CD14-positive monocyte (primary cell): ENCODE measurements at regions of chr13 and their contacts with region 1.

Region 1: GRCh38 chr13:80469853-80470381 is 129.0 kb upstream of the SPRY2 start:
- DNase-seq: peak; percentile 67 to 85 (median 69)
- H3K4me3 ChIP-seq: peak overlapping the region in 1 of 3 experiments; percentile 19
- H3K4me3 Mint-ChIP-seq: peak overlapping the region in 1 of 2 donors; percentile 73
- H3K27ac ChIP-seq: no peak overlapping the region
- H3K27ac Mint-ChIP-seq: peak overlapping the region in 5 of 7 donors; percentile 18 to 92 (median 79)
- H3K4me1 ChIP-seq: peaks cover 26 to 27% of the 10 kb centered on the region in 2 donors
- H3K4me1 Mint-ChIP-seq: peaks cover 33% of the 10 kb centered on the region
- H3K27me3 ChIP-seq: no peaks in the 10 kb centered on the region
- H3K27me3 Mint-ChIP-seq: peaks cover 2 to 4% (median 2%) of the 10 kb centered on the region in 3 donors
- CTCF ChIP-seq: no peak

Region 2: GRCh38 chr13:80054806-80055205 is 415.1 kb before region 1 on chr13:
- intact Hi-C with region 1: loop called in 1 of 2 experiments (anchors 10 kb)
- DNase-seq: no peak
- H3K4me3 ChIP-seq: no peak overlapping the region
- H3K4me3 Mint-ChIP-seq: no peak overlapping the region
- H3K27ac ChIP-seq: no peak overlapping the region
- H3K27ac Mint-ChIP-seq: no peak overlapping the region
- H3K4me1 ChIP-seq: peaks cover 7% of the 10 kb centered on the region in 2 donors
- H3K4me1 Mint-ChIP-seq: peaks cover 10% of the 10 kb centered on the region
- H3K27me3 ChIP-seq: no peaks in the 10 kb centered on the region
- H3K27me3 Mint-ChIP-seq: peaks cover 0 to 1% (median 0%) of the 10 kb centered on the region in 3 donors
- CTCF ChIP-seq: no peak

Region 3: DNA sequence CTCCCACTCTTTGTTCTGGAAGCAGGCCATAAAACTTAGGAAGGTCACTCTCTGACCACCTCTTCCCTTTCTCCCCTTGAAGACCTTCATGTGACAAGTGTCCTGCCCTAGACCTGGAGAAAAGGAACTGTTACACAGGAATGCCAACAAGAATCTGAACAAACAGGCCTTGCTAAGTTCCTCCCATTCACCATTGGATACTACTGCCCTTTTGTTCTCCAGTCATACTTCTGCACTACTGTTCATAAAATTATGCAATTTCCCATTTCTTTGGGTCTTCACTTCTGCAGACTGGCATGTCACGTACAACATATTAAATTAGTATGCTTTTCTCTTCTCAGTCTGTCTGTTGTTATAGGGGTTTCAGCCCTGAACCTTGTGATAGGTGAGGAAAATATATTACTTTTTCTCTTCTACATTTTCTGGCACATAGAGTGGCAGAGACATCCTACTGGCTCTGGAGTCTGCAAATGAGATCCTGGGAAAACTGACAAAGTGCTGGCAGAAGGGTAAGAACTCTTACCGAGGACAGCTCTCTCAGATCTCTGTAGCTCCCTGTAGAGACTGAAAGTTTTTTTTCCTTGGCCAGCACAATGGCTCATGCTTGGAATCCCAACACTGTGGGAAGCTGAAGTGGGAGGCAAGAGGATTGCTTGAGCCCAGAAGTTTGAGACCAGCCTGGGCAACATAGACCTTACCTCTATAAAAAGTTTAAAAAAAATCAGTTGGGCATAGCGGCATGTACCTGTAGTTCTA is 41.4 kb before region 1 on chr13:
- intact Hi-C with region 1: loop called in 1 of 2 experiments (anchors 10 kb)
- DNase-seq: peak; percentile 17 to 43 (median 22)
- H3K4me3 ChIP-seq: no peak overlapping the region
- H3K4me3 Mint-ChIP-seq: no peak overlapping the region
- H3K27ac ChIP-seq: no peak overlapping the region
- H3K27ac Mint-ChIP-seq: no peak overlapping the region
- H3K4me1 ChIP-seq: peaks cover 8 to 9% of the 10 kb centered on the region in 2 donors
- H3K4me1 Mint-ChIP-seq: peaks cover 7% of the 10 kb centered on the region
- H3K27me3 ChIP-seq: no peaks in the 10 kb centered on the region
- H3K27me3 Mint-ChIP-seq: peaks cover 0 to 2% (median 0%) of the 10 kb centered on the region in 3 donors
- CTCF ChIP-seq: no peak

Region 4: GRCh38 chr13:80438521-80438920 is 31.4 kb before region 1 on chr13:
- intact Hi-C with region 1: no loop called
- DNase-seq: no peak
- H3K4me3 ChIP-seq: no peak overlapping the region
- H3K4me3 Mint-ChIP-seq: no peak overlapping the region
- H3K27ac ChIP-seq: no peak overlapping the region
- H3K27ac Mint-ChIP-seq: no peak overlapping the region
- H3K4me1 ChIP-seq: peaks cover 5 to 18% of the 10 kb centered on the region in 2 donors
- H3K4me1 Mint-ChIP-seq: peaks cover 23% of the 10 kb centered on the region
- H3K27me3 ChIP-seq: peaks cover 2% of the 10 kb centered on the region in 2 donors
- H3K27me3 Mint-ChIP-seq: peaks cover 0 to 7% (median 6%) of the 10 kb centered on the region in 3 donors
- CTCF ChIP-seq: no peak